Activated CD4-positive, alpha-beta memory T cell treated with anti-CD3 and anti-CD28 coated beads, Interleukin-2, amount 10 ng/mL, durations not matched to agents 7 days and 5 days (primary cell): ENCODE measurements at regions of chr5 and their contacts with region 1.

Region 1: DNA sequence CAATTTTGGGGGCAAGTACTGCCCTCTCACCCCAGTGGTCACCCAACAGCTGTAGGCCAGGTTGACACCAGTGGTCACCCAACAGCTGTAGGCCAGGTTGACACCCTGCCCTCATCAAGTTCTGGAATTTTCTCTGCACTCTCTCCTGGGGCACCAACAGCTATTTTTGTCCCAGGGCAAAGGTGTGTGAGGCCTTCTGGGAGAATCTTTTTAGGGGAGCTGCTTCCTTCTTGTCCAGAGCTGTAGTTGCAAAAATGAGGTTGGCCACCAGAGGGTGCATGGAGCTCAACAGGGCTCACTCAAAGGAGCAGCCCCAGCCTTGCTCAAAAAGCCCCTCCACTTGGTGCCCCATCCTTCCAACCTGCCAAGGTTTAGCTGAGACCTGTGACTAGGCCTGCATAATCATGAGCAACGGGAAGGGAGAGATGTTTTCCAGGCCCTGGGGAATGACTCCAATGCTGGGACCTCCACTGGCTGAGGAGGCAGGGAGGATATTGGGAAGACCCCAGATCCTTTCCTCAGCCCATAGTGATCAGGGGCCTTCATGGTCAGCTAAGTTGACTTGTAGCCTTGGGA is 10.6 kb upstream of the P4HA2 start:
- DNase-seq: peak; percentile 77
- H3K4me3 Mint-ChIP-seq: no peak overlapping the region
- H3K27ac Mint-ChIP-seq: no peak overlapping the region
- H3K4me1 Mint-ChIP-seq: no peaks in the 10 kb centered on the region
- H3K27me3 Mint-ChIP-seq: peaks cover 7% of the 10 kb centered on the region

Region 2: GRCh38 chr5:132064738-132065331 is 173.4 kb before region 1 on chr5:
- CTCF ChIA-PET with region 1: interaction called, 24 read pairs
- POLR2A ChIA-PET with region 1: no interaction called
- DNase-seq: peak; percentile 85
- H3K4me3 Mint-ChIP-seq: no peak overlapping the region
- H3K27ac Mint-ChIP-seq: no peak overlapping the region
- H3K4me1 Mint-ChIP-seq: peaks cover 35% of the 10 kb centered on the region
- H3K27me3 Mint-ChIP-seq: no peaks in the 10 kb centered on the region

Region 3: GRCh38 chr5:132180134-132180745 is 58.0 kb before region 1 on chr5:
- CTCF ChIA-PET with region 1: interaction called, 13 read pairs
- POLR2A ChIA-PET with region 1: no interaction called
- DNase-seq: no peak
- H3K4me3 Mint-ChIP-seq: no peak overlapping the region
- H3K27ac Mint-ChIP-seq: peak overlapping the region; percentile 58
- H3K4me1 Mint-ChIP-seq: peaks cover 44% of the 10 kb centered on the region
- H3K27me3 Mint-ChIP-seq: no peaks in the 10 kb centered on the region

Region 4: GRCh38 chr5:132215329-132215728 is 22.9 kb before region 1 on chr5:
- CTCF ChIA-PET with region 1: interaction called, 11 read pairs
- POLR2A ChIA-PET with region 1: no interaction called
- DNase-seq: no peak
- H3K4me3 Mint-ChIP-seq: no peak overlapping the region
- H3K27ac Mint-ChIP-seq: no peak overlapping the region
- H3K4me1 Mint-ChIP-seq: no peaks in the 10 kb centered on the region
- H3K27me3 Mint-ChIP-seq: no peaks in the 10 kb centered on the region

Region 5: DNA sequence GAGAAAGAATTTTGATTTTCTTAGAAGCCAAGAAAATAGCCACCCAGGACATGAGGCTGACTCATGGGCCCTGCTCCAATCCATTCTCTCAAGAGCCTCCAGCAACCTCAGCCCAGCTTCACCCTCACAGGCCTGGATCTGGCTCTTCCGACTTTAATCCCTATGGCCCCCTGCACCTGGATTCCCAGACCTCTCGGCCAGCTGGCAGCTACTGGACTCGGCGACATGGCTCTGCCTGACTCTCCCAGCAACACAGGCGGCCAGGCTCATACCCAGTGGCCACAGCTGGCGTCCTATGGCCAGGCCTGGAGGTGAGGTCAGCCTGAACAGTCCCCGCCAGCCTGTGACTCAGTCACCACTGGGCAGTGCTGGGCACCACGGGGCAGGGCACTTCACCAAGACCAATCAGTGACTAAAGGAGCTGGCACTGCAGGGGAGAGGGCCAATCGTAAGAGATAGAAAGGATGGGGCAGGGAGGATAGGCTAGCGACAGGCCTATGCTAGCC is 13.0 kb after region 1 on chr5:
- CTCF ChIA-PET with region 1: interaction called, 46 read pairs
- POLR2A ChIA-PET with region 1: no interaction called
- DNase-seq: no peak
- H3K4me3 Mint-ChIP-seq: no peak overlapping the region
- H3K27ac Mint-ChIP-seq: no peak overlapping the region
- H3K4me1 Mint-ChIP-seq: no peaks in the 10 kb centered on the region
- H3K27me3 Mint-ChIP-seq: peaks cover 19% of the 10 kb centered on the region

Region 6: DNA sequence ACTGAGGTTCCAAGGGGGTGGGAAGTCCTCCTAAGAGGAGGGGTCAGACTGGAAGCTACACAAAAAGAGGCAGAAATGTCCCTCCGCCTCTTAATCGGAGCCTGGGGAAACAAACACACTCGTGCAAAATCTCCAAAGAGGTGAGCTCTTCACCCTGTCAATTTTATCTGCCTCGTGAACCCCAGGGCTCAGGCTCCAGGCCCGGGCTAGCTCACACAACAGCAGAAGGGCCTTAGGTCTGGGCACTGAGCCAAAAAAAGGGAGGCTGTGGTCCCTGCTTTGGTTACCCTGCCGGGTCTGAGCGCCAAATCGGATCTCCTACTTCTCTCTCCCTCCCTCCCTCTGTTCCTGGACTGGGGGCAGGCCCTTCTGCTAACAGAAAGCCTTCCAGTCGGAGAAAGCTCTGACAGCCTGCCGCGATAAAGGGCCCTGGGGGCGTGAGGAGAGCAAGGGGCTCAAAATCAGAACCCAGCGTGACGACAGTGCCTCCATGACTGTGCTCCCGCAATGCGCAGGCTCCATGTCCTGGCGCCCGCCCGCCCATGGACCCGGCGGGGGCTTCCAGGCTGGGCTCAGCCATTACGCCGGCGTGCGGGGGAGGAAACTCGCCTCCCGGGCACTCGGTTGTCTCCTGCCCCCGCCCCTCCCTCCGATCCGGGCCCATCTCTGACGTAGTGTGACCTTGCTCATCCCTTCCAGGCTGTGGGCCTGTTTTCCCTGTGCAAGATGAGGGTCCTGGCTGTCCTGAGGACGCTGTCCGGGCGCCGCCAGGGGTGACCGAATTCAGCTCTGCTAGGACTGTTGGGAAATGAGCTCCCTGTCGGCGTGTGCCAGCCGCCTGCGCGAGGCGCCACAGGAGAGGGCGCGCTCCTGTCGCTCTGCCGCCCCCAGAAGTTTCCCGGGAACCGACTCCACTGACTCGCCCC is 55.1 kb after region 1 on chr5:
- CTCF ChIA-PET with region 1: interaction called, 13 read pairs
- POLR2A ChIA-PET with region 1: no interaction called
- DNase-seq: peak; percentile 56
- H3K4me3 Mint-ChIP-seq: peak overlapping the region; percentile 87
- H3K27ac Mint-ChIP-seq: no peak overlapping the region
- H3K4me1 Mint-ChIP-seq: peaks cover 30% of the 10 kb centered on the region
- H3K27me3 Mint-ChIP-seq: peaks cover 5% of the 10 kb centered on the region

Region 7: GRCh38 chr5:132500931-132501630 is 262.8 kb after region 1 on chr5:
- CTCF ChIA-PET with region 1: interaction called, 17 read pairs
- POLR2A ChIA-PET with region 1: no interaction called
- DNase-seq: peak; percentile 78
- H3K4me3 Mint-ChIP-seq: no peak overlapping the region
- H3K27ac Mint-ChIP-seq: no peak overlapping the region
- H3K4me1 Mint-ChIP-seq: peaks cover 39% of the 10 kb centered on the region
- H3K27me3 Mint-ChIP-seq: peaks cover 3% of the 10 kb centered on the region

Region 8: GRCh38 chr5:132839426-132840301 is 601.4 kb after region 1 on chr5:
- CTCF ChIA-PET with region 1: no interaction called
- POLR2A ChIA-PET with region 1: no interaction called
- DNase-seq: peak; percentile 5
- H3K4me3 Mint-ChIP-seq: no peak overlapping the region
- H3K27ac Mint-ChIP-seq: no peak overlapping the region
- H3K4me1 Mint-ChIP-seq: no peaks in the 10 kb centered on the region
- H3K27me3 Mint-ChIP-seq: no peaks in the 10 kb centered on the region